ENCODE measurements at regions of chr1 and their contacts with region 1.

Region 1: DNA sequence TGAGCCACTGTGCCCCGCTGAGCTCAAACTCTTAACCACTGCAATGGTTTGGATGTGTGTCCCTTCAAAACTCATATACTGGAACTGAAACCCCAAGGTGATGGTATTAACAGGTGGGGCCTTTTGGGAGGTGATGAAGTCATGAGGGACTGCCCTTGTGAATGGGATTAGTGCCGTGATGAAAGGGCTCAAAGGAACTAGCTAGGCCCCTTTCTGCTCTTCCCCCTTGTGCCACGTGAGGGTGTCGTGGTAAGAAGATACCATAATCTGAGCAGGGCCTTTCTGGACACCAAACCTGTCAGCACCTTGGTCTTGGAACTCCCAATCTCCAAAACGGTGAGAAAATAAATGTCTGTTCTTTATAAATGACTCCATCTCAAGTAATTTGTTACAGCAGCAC is 45.5 kb upstream of the SPOCD1 start:
- DNase-seq: peak; percentile 40
- ATAC-seq: peak; percentile 41
- H3K4me3 ChIP-seq: no peak overlapping the region
- H3K4me3 Mint-ChIP-seq: no peak overlapping the region
- H3K27ac ChIP-seq: no peak overlapping the region
- H3K27ac Mint-ChIP-seq: no peak overlapping the region
- H3K4me1 ChIP-seq: peaks cover 2 to 4% of the 10 kb centered on the region in 2 donors
- H3K4me1 Mint-ChIP-seq: peaks cover 5% of the 10 kb centered on the region
- H3K27me3 ChIP-seq: no peaks in the 10 kb centered on the region
- H3K27me3 Mint-ChIP-seq: no peaks in the 10 kb centered on the region
- CTCF ChIP-seq: peak; percentile 26

Region 2: DNA sequence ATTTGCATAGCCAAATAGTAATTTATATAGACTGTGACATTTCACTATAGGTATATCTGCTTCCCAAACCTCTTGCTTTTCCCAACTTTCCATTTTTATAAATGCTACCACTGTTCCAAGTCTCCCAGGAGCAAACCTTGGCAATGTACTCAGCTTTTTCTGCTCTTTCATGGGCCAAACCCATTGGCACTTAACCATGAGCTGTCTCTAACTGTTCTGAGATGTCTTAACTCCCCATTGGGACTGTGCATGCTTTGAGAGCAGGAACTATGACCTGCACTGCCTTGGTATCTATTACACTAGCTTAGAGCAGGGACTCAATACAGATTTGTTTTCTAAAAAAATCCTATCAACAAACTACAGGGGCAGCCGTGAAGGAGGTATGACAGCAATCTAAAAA is 129.8 kb after region 1 on chr1:
- CTCF ChIA-PET with region 1: no interaction called
- POLR2A ChIA-PET with region 1: interaction called, 12 read pairs
- intact Hi-C with region 1: no loop called
- DNase-seq: no peak
- ATAC-seq: no peak
- H3K4me3 ChIP-seq: no peak overlapping the region
- H3K4me3 Mint-ChIP-seq: no peak overlapping the region
- H3K27ac ChIP-seq: no peak overlapping the region
- H3K27ac Mint-ChIP-seq: no peak overlapping the region
- H3K4me1 ChIP-seq: peaks cover 0 to under 1% of the 10 kb centered on the region in 2 donors
- H3K4me1 Mint-ChIP-seq: peaks cover 4% of the 10 kb centered on the region
- H3K27me3 ChIP-seq: no peaks in the 10 kb centered on the region
- H3K27me3 Mint-ChIP-seq: no peaks in the 10 kb centered on the region
- CTCF ChIP-seq: no peak